Activated CD4-positive, alpha-beta T cell treated with anti-CD3 and anti-CD28 coated beads, Interleukin-2, amount 10 ng/mL, durations not matched to agents 7 days and 5 days (primary cell): ENCODE measurements at regions of chr6 and their contacts with region 1.

Region 1: GRCh38 chr6:227074-227782 is 65.1 kb upstream of the DUSP22 start:
- DNase-seq: no peak
- H3K4me3 Mint-ChIP-seq: no peak overlapping the region
- H3K27ac Mint-ChIP-seq: peak overlapping the region; percentile 44
- H3K4me1 Mint-ChIP-seq: peaks cover 76% of the 10 kb centered on the region
- H3K27me3 Mint-ChIP-seq: no peaks in the 10 kb centered on the region

Region 2: DNA sequence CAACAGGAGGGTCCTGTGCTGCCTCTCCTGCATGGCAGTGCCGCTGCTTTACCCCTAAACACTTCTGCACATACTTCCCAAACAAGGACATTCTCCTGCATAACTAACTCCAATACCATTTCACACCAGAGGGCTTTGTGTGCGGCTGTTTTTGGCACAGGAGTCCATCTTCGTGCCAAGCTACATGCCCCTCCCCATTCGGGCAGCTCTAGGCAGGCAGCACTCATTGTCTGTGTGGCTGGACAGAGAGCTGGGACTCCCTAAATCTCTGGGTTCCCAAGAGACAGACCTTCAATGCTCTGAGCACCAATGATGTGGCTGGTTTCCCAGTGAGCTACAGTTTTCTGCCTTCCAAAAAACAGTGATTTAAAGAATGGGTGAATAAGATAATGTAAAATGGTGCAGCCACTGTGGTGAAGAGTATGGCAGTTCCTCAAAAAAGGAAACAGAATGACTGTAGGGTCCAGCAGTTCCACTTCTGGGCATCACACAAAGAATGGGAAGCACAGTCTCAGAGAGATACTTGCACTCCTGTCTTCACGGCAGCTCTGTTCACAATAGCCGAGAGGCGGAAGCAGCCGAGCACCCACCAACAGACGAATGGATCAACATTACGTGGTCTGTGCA is 15.2 kb before region 1 on chr6:
- CTCF ChIA-PET with region 1: interaction called, 10 read pairs
- POLR2A ChIA-PET with region 1: no interaction called
- DNase-seq: no peak
- H3K4me3 Mint-ChIP-seq: no peak overlapping the region
- H3K27ac Mint-ChIP-seq: peak overlapping the region; percentile 51
- H3K4me1 Mint-ChIP-seq: peaks cover 54% of the 10 kb centered on the region
- H3K27me3 Mint-ChIP-seq: no peaks in the 10 kb centered on the region